ENCODE measurements at regions of chr17 and their contacts with region 1.

Region 1: GRCh38 chr17:78250891-78251794 is 19.7 kb downstream of the TMEM235 start:
- H3K4me3 ChIP-seq: no peak overlapping the region
- H3K27ac ChIP-seq: no peak overlapping the region
- H3K4me1 ChIP-seq: no peaks in the 10 kb centered on the region
- CTCF ChIP-seq: peak; percentile 99

Region 2: GRCh38 chr17:78082988-78083387 is 168.2 kb before region 1 on chr17:
- CTCF ChIA-PET with region 1: interaction called, 37 read pairs
- POLR2A ChIA-PET with region 1: no interaction called
- H3K4me3 ChIP-seq: no peak overlapping the region
- H3K27ac ChIP-seq: no peak overlapping the region
- H3K4me1 ChIP-seq: no peaks in the 10 kb centered on the region
- CTCF ChIP-seq: no peak

Region 3: DNA sequence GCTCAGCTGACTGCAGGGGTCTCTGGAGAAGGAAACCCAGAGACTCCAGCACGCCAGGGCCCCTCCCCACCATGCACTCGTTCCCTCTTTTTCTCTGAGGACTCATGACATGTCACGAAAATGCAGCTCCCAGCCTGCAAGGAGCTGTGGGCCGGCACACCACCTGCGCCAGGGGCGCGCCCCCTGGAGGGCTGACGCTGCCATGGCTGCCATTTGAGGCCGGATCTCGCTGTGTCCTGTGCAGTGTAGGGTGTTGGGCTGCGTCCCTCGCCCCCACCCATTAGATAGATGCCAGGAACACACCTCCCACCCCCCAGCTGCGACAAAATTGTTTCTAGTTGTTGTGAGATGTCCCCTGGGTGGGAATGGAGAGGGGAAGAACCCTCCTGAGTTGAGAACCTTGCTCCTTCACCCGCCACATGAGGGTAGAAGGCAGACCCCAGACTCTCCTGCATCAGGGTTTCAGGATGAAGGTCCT is 74.6 kb before region 1 on chr17:
- CTCF ChIA-PET with region 1: interaction called, 12 read pairs
- POLR2A ChIA-PET with region 1: interaction called, 3 read pairs
- H3K4me3 ChIP-seq: no peak overlapping the region
- H3K27ac ChIP-seq: no peak overlapping the region
- H3K4me1 ChIP-seq: no peaks in the 10 kb centered on the region; the same call in 1 of the 2 replicates
- CTCF ChIP-seq: peak; percentile 90

Region 4: GRCh38 chr17:78214706-78215061 is 36.5 kb before region 1 on chr17:
- CTCF ChIA-PET with region 1: interaction called, 18 read pairs
- POLR2A ChIA-PET with region 1: interaction called, 3 read pairs
- H3K4me3 ChIP-seq: peak overlapping the region; percentile 94
- H3K27ac ChIP-seq: peak overlapping the region; percentile 91
- H3K4me1 ChIP-seq: peaks cover 11% of the 10 kb centered on the region
- CTCF ChIP-seq: no peak

Region 5: GRCh38 chr17:78268951-78269905 is 18.1 kb after region 1 on chr17:
- CTCF ChIA-PET with region 1: interaction called, 22 read pairs
- POLR2A ChIA-PET with region 1: interaction called, 5 read pairs
- H3K4me3 ChIP-seq: no peak overlapping the region
- H3K27ac ChIP-seq: no peak overlapping the region
- H3K4me1 ChIP-seq: peaks cover 8% of the 10 kb centered on the region; the same call in 1 of the 2 replicates
- CTCF ChIP-seq: no peak

Measured in HEK293 (cell line).